Transverse colon (tissue), 4 donors: ENCODE measurements at regions of chr3 and their contacts with region 1.

Region 1: DNA sequence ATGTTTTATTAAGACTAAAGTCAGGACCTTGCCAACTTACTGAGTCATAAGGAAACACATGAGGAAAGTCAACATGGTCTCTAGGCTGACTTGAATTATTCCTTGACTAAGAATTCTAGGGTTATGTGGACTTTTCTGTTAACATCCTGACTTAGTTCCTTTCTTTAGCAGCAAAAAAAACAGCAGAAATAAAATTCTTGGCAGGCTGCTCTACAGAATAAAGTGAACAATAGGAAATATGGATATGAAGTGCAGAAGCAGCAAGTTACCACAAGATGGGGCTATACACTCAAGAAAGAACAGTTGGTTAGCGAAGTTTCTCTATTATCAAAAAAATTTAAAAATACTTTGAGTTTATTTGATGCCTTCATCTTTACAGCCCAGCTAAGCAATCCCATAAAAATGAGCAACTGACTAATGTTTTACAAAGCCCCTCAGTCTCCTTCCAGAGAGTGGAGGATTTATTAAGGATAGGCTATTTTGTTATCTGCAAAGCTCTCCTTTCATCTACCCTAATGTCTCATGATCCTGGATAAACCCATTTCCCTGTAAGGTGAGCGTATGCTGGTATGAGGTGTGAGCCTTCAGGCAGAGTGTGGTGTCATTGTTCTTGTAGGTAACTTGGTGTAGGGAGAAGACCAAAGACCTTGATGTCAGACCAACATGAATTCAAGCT is 23.1 kb upstream of the MCCC1 start:
- DNase-seq: no peak
- H3K4me3 ChIP-seq: no peak overlapping the region
- H3K27ac ChIP-seq: no peak overlapping the region
- H3K4me1 ChIP-seq: peaks cover 0 to 7% (median 0%) of the 10 kb centered on the region in 4 donors
- H3K27me3 ChIP-seq: peaks cover 7% of the 10 kb centered on the region
- CTCF ChIP-seq: peak; percentile 83 to 87 (median 84)
- EP300 ChIP-seq: no peak
- POLR2A ChIP-seq: no peak

Region 2: GRCh38 chr3:183188895-183189462 is 66.6 kb after region 1 on chr3:
- in situ Hi-C with region 1: loop called in 1 of 4 experiments (anchors 10 kb)
- intact Hi-C with region 1: no loop called
- DNase-seq: peak; percentile 43
- H3K4me3 ChIP-seq: no peak overlapping the region
- H3K27ac ChIP-seq: no peak overlapping the region
- H3K4me1 ChIP-seq: peaks cover 0 to 11% (median 3%) of the 10 kb centered on the region in 4 donors
- H3K27me3 ChIP-seq: no peaks in the 10 kb centered on the region
- CTCF ChIP-seq: peak in 3 of 5 experiments; percentile 16 to 26 (median 18)
- EP300 ChIP-seq: no peak
- POLR2A ChIP-seq: no peak

Region 3: DNA sequence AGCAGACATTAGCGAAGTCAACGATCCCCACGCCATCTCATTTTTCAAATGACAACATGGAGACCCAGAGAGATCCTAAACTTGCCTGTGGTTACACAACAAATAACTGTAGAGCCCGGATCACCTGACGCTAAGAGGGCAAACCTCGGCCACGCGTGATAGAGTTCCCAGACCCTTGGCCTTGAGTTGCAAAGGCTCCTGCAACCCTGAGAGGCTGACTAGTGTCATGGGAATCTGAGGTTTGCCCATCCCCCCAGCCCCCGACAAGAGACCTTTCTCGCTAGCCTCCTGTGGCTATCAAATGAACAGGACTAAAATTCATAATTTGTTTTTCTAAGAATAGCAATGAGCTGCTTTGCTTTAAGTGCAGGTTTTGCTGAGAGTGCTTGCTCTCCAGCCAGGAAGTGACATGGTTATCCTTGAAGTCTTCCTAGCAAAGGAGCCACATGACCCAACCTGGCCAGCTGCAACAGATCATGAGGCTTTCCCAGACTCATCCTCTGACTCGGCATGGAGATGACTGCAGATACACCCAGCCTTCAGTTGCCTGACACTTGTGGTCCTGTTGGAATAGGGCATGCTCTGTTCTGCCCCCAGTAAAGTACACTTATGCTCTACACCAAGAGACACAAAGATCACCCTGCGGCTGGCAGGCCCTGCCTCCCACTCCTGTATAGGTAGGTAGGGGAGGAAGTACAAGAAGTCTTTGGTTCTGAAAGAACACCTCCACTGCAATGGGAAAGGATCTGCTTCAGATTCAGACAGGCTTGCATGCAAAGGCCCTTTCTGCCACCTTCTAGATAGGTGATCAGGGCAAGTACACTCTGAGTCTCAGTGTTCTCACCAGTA is 270.0 kb after region 1 on chr3:
- in situ Hi-C with region 1: loop called (anchors 5 to 10 kb)
- intact Hi-C with region 1: no loop called
- DNase-seq: no peak
- H3K4me3 ChIP-seq: no peak overlapping the region
- H3K27ac ChIP-seq: no peak overlapping the region
- H3K4me1 ChIP-seq: no peaks in the 10 kb centered on the region
- H3K27me3 ChIP-seq: no peaks in the 10 kb centered on the region
- CTCF ChIP-seq: no peak
- EP300 ChIP-seq: no peak
- POLR2A ChIP-seq: no peak

Region 4: GRCh38 chr3:184371570-184372018 is 1249.2 kb after region 1 on chr3:
- in situ Hi-C with region 1: no loop called
- intact Hi-C with region 1: no loop called
- DNase-seq: peak; percentile 78
- H3K4me3 ChIP-seq: no peak overlapping the region
- H3K27ac ChIP-seq: no peak overlapping the region
- H3K4me1 ChIP-seq: peaks cover 0 to 7% (median 0%) of the 10 kb centered on the region in 4 donors
- H3K27me3 ChIP-seq: peaks cover 11% of the 10 kb centered on the region
- CTCF ChIP-seq: peak; percentile 85 to 93 (median 91)
- EP300 ChIP-seq: no peak
- POLR2A ChIP-seq: no peak